ENCODE measurements at regions of chr16 and their contacts with region 1.

Region 1: DNA sequence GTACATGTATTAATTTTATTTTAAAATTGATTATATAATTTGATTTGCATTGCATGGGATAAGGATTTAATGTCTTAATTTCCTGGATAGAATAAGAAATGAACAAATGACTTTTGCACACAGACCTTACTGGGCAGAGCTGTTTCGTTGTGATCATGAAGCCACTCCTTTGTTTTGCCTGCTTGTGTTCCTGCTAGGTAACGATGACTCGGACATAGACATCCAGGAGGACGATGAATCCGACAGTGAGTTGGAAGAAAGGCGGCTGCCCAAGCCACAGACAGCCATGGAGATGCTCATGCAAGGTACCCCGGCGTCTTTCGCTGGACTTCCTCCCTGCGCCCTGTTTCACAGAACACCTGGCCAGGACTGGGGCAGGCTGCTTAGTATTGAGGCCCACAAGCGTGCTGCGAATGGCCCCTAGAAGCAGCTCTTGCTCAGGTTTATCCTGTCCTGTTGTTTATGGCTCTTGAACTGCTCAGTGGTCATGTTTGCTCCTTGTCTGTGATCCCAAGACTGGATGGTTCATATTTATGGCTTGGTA is 29.6 kb downstream of the CLUAP1 start:
- DNase-seq: no peak
- H3K4me3 ChIP-seq: no peak overlapping the region
- H3K4me3 Mint-ChIP-seq: no peak overlapping the region
- H3K27ac ChIP-seq: no peak overlapping the region
- H3K27ac Mint-ChIP-seq: peak overlapping the region in 1 of 7 donors; percentile 43
- H3K4me1 ChIP-seq: no peaks in the 10 kb centered on the region
- H3K4me1 Mint-ChIP-seq: peaks cover 8 to 30% (median 15%) of the 10 kb centered on the region in 4 donors
- H3K27me3 ChIP-seq: no peaks in the 10 kb centered on the region
- H3K27me3 Mint-ChIP-seq: no peaks in the 10 kb centered on the region

Region 2: GRCh38 chr16:3625911-3626732 is 95.7 kb after region 1 on chr16:
- CTCF ChIA-PET with region 1: no interaction called
- POLR2A ChIA-PET with region 1: no interaction called
- intact Hi-C with region 1: no loop called
- DNase-seq: peak in 4 of 5 donors; percentile 31 to 42 (median 36)
- H3K4me3 ChIP-seq: no peak overlapping the region
- H3K4me3 Mint-ChIP-seq: peak overlapping the region in 7 of 8 donors; percentile 28 to 69 (median 47)
- H3K27ac ChIP-seq: peak overlapping the region; percentile 15
- H3K27ac Mint-ChIP-seq: peak overlapping the region; percentile 71 to 92 (median 83)
- H3K4me1 ChIP-seq: peaks cover 31% of the 10 kb centered on the region
- H3K4me1 Mint-ChIP-seq: peaks cover 20 to 46% (median 35%) of the 10 kb centered on the region in 4 donors
- H3K27me3 ChIP-seq: no peaks in the 10 kb centered on the region
- H3K27me3 Mint-ChIP-seq: no peaks in the 10 kb centered on the region

Region 3: GRCh38 chr16:3665508-3665907 is 135.1 kb after region 1 on chr16:
- CTCF ChIA-PET with region 1: interaction called, 3 read pairs
- POLR2A ChIA-PET with region 1: no interaction called
- intact Hi-C with region 1: loop called (anchors 1 kb)
- DNase-seq: peak in 4 of 5 donors; percentile 21 to 34 (median 28)
- H3K4me3 ChIP-seq: no peak overlapping the region
- H3K4me3 Mint-ChIP-seq: peak overlapping the region in 2 of 8 donors; percentile 31 to 38
- H3K27ac ChIP-seq: peak overlapping the region; percentile 3
- H3K27ac Mint-ChIP-seq: peak overlapping the region; percentile 19 to 89 (median 76)
- H3K4me1 ChIP-seq: peaks cover 15% of the 10 kb centered on the region
- H3K4me1 Mint-ChIP-seq: peaks cover 13 to 23% (median 17%) of the 10 kb centered on the region in 4 donors
- H3K27me3 ChIP-seq: no peaks in the 10 kb centered on the region
- H3K27me3 Mint-ChIP-seq: no peaks in the 10 kb centered on the region

Measured in CD4-positive, alpha-beta memory T cell (primary cell).